Dendritic cell treated with granulocyte-macrophage colony-stimulating factor and Interleukin-4, amounts not matched to agents 40 ng/mL and 50 ng/mL, for 4 days (primary cell): ENCODE measurements at regions of chr3 and their contacts with region 1.

Region 1: DNA sequence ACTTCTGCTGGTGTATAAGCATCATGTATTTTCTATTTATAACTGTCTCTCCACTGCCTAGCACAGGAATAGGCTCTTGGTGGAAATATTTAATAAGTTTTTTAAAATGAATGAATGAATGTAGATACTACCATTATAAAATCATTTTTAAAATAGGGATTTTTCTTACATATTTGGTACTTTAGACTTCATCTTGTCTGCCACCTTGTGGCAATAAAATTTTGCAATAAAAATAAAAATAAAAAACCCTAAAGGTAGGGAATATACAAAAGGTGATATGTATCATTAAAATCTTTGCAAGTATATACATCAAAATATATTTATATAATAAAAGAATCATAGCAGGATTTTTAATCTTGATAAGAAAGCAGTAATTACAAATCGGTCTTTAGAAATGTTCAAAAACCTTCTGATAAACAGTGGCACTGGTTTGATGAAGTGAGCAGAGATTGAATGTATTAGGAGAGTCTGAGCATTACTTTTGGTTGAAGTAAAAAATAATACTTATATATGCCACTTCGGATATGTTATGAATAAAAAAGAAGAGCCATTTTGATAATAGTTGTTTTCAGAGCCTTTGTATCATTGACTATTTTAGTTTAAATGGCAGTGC is 95.2 kb downstream of the SPATA16 start:
- H3K4me3 Mint-ChIP-seq: no peak overlapping the region
- H3K27ac Mint-ChIP-seq: no peak overlapping the region
- H3K4me1 Mint-ChIP-seq: no peaks in the 10 kb centered on the region
- H3K27me3 Mint-ChIP-seq: no peaks in the 10 kb centered on the region

Region 2: GRCh38 chr3:172814738-172815137 is 231.1 kb before region 1 on chr3:
- intact Hi-C with region 1: loop called (anchors 10 kb)
- H3K4me3 Mint-ChIP-seq: no peak overlapping the region
- H3K27ac Mint-ChIP-seq: no peak overlapping the region
- H3K4me1 Mint-ChIP-seq: no peaks in the 10 kb centered on the region
- H3K27me3 Mint-ChIP-seq: no peaks in the 10 kb centered on the region

Region 3: GRCh38 chr3:172918165-172918564 is 127.7 kb before region 1 on chr3:
- intact Hi-C with region 1: no loop called
- H3K4me3 Mint-ChIP-seq: no peak overlapping the region
- H3K27ac Mint-ChIP-seq: no peak overlapping the region
- H3K4me1 Mint-ChIP-seq: no peaks in the 10 kb centered on the region
- H3K27me3 Mint-ChIP-seq: no peaks in the 10 kb centered on the region